ENCODE measurements at regions of chr1 and their contacts with region 1.

Region 1: GRCh38 chr1:222455188-222455879 is 92.6 kb downstream of the HHIPL2 start:
- DNase-seq: peak; percentile 73
- H3K4me3 ChIP-seq: no peak overlapping the region
- H3K27ac ChIP-seq: no peak overlapping the region
- H3K4me1 ChIP-seq: no peaks in the 10 kb centered on the region
- H3K27me3 ChIP-seq: peaks cover 2 to 3% of the 10 kb centered on the region in 2 experiments
- CTCF ChIP-seq: peak; percentile 90 to 94
- POLR2A ChIP-seq: no peak

Region 2: GRCh38 chr1:220803401-220804201 is 1651.7 kb before region 1 on chr1:
- CTCF ChIA-PET with region 1: interaction called, 34 read pairs
- POLR2A ChIA-PET with region 1: no interaction called
- dilution Hi-C with region 1: no loop called
- intact Hi-C with region 1: no loop called
- DNase-seq: peak; percentile 59
- H3K4me3 ChIP-seq: no peak overlapping the region
- H3K27ac ChIP-seq: no peak overlapping the region
- H3K4me1 ChIP-seq: no peaks in the 10 kb centered on the region
- H3K27me3 ChIP-seq: peaks cover 6 to 11% of the 10 kb centered on the region in 2 experiments
- CTCF ChIP-seq: peak; percentile 62 to 83
- POLR2A ChIP-seq: no peak

Region 3: GRCh38 chr1:220873868-220874655 is 1581.3 kb before region 1 on chr1:
- CTCF ChIA-PET with region 1: interaction called, 9 read pairs
- POLR2A ChIA-PET with region 1: no interaction called
- dilution Hi-C with region 1: no loop called
- intact Hi-C with region 1: loop called (anchors 1 kb)
- DNase-seq: peak; percentile 93
- H3K4me3 ChIP-seq: no peak overlapping the region
- H3K27ac ChIP-seq: peak overlapping the region; percentile 0
- H3K4me1 ChIP-seq: peaks cover 37% of the 10 kb centered on the region
- H3K27me3 ChIP-seq: peaks cover 3 to 14% of the 10 kb centered on the region in 2 experiments
- CTCF ChIP-seq: peak; percentile 52 to 69
- POLR2A ChIP-seq: no peak

Region 4: GRCh38 chr1:221478050-221478949 is 977.0 kb before region 1 on chr1:
- CTCF ChIA-PET with region 1: interaction called, 34 read pairs
- POLR2A ChIA-PET with region 1: no interaction called
- dilution Hi-C with region 1: no loop called
- intact Hi-C with region 1: loop called (anchors 2 kb)
- DNase-seq: peak; percentile 17
- H3K4me3 ChIP-seq: no peak overlapping the region
- H3K27ac ChIP-seq: no peak overlapping the region
- H3K4me1 ChIP-seq: no peaks in the 10 kb centered on the region
- H3K27me3 ChIP-seq: peaks cover 0 to 3% of the 10 kb centered on the region in 2 experiments
- CTCF ChIP-seq: peak in 1 of 2 donors; percentile 12
- POLR2A ChIP-seq: no peak

Region 5: DNA sequence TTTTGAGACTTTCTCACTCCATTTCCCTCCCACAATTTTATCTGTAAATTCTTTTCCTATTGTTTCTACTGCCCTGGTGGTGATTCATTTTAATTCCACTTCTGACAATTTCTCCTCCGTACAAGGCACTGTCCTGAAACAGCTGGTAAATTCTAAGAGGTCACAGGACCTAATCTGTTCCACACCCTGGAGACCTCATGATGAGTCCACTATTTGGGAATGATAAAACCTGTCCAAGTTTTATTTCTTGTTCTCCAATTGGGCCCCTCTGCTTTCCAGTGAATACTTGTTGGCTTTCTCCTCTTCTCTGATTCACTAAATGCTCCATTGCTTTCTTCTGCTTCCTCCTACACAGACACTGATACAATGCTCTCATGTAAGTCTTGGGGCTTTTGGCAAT is 370.3 kb before region 1 on chr1:
- CTCF ChIA-PET with region 1: no interaction called
- POLR2A ChIA-PET with region 1: no interaction called
- dilution Hi-C with region 1: no loop called
- intact Hi-C with region 1: no loop called
- DNase-seq: no peak
- H3K4me3 ChIP-seq: no peak overlapping the region
- H3K27ac ChIP-seq: no peak overlapping the region
- H3K4me1 ChIP-seq: no peaks in the 10 kb centered on the region
- H3K27me3 ChIP-seq: no peaks in the 10 kb centered on the region
- CTCF ChIP-seq: no peak
- POLR2A ChIP-seq: no peak

Region 6: DNA sequence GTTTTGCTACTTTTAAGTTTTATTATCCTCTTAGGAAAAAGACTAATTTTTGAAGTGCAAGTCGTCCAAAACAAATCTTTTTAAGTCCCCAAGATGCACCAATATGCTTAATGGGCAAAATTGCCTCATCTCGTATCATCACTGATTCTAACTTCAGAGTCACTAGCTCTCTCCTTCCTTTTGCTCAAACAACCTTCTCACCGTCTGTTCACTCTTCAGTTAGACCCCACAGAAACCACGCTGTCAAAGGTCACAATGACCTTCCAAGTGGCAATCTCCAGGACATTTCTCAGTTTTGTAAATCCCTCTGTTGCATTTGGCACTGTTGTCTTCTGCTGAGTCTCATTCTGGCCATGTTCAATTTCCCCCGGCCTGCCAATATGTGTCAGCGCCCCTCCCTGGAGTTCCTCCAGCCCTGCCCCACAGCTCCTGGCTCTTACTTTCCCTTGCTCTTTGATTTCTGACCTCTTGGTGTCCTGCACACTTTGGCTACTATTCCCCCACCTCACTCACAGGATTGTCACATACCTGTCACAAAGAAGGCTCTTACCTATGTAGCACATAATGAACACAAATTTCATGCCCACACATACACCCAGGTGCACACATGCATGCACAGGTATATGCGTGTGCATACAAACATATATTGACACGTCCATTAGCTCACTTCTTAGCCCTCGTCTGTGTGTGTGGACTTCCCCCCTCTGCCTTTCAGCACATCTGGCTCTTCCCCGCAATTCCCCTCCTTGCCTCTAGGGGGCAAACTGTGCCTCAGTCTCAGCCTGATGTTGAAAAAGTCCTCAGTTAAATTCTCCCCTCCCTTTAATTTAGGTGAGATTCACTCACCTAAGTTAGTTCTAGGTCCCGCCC is 359.5 kb before region 1 on chr1:
- CTCF ChIA-PET with region 1: interaction called, 7 read pairs
- POLR2A ChIA-PET with region 1: no interaction called
- dilution Hi-C with region 1: no loop called
- intact Hi-C with region 1: loop called (anchors 1 kb)
- DNase-seq: peak; percentile 24
- H3K4me3 ChIP-seq: no peak overlapping the region
- H3K27ac ChIP-seq: no peak overlapping the region
- H3K4me1 ChIP-seq: no peaks in the 10 kb centered on the region
- H3K27me3 ChIP-seq: no peaks in the 10 kb centered on the region
- CTCF ChIP-seq: peak; percentile 79 to 83
- POLR2A ChIP-seq: no peak

Region 7: DNA sequence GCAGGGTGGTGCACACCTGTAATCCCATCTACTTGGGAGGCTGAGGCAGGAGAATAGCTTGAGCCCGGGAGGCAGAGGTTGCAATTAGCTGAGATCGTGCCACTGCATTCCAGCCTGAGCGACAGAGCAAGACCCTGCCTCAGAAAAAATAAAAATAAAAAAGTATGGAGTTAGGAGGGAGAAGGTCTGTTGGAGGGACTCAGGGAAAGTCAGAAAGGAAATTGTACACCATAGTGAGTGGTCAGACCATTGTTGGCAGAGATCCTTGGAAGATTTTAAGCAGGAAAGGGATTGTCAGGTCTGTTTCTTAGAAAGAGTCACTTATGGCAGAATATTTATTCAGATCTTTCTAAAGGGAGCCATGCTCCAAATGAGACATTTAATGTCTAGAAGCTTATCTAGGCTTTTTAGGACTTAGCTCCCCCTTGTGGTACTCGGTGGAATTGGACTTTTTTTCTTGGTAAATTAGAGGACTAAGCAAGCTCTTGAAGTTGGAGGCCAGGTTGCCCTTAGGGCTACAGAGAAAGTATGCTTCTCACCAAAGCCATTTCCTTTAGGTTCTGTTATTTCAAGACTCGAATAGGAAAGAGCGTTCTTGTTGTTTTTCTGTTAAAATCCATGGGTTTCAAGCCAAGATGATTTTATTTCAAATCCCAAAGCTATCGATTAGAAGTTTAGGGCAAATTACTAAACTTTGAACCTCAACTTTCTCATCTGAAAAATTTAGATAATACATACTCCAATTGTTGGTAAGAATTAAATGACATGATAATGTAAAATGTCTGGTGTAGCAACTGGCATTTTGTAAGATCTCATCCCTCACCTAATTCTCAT is 179.1 kb after region 1 on chr1:
- CTCF ChIA-PET with region 1: interaction called, 14 read pairs
- POLR2A ChIA-PET with region 1: no interaction called
- dilution Hi-C with region 1: no loop called
- intact Hi-C with region 1: no loop called
- DNase-seq: peak; percentile 93
- H3K4me3 ChIP-seq: no peak overlapping the region
- H3K27ac ChIP-seq: no peak overlapping the region
- H3K4me1 ChIP-seq: no peaks in the 10 kb centered on the region
- H3K27me3 ChIP-seq: no peaks in the 10 kb centered on the region
- CTCF ChIP-seq: peak; percentile 64 to 72
- POLR2A ChIP-seq: no peak

Measured in endothelial cell of umbilical vein (primary cell).